Activated CD4-positive, alpha-beta memory T cell treated with anti-CD3 and anti-CD28 coated beads, Interleukin-2, amount 10 ng/mL, durations not matched to agents 7 days and 5 days (primary cell): ENCODE measurements at regions of chr11 and their contacts with region 1.

Region 1: GRCh38 chr11:62612366-62613290 is at the starts of genes EML3 and ROM1:
- DNase-seq: peak; percentile 91
- H3K4me3 Mint-ChIP-seq: peak within 1 kb of the TSS; percentile 97
- H3K27ac Mint-ChIP-seq: peak within 1 kb of the TSS; percentile 93
- H3K4me1 Mint-ChIP-seq: peaks cover 65% of the 10 kb centered on the region
- H3K27me3 Mint-ChIP-seq: no peaks in the 10 kb centered on the region
- total RNA-seq, gene EML3: 121 to 122 TPM
- total RNA-seq, gene ROM1: 1.6 to 2.2 TPM

Region 2: GRCh38 chr11:62652161-62653006 is 39.8 kb after region 1 on chr11:
- CTCF ChIA-PET with region 1: no interaction called
- POLR2A ChIA-PET with region 1: interaction called, 11 read pairs
- DNase-seq: peak; percentile 47
- H3K4me3 Mint-ChIP-seq: peak overlapping the region; percentile 91
- H3K27ac Mint-ChIP-seq: peak overlapping the region; percentile 85
- H3K4me1 Mint-ChIP-seq: peaks cover 34% of the 10 kb centered on the region
- H3K27me3 Mint-ChIP-seq: no peaks in the 10 kb centered on the region

Region 3: GRCh38 chr11:62922658-62923431 is 310.2 kb after region 1 on chr11:
- CTCF ChIA-PET with region 1: no interaction called
- POLR2A ChIA-PET with region 1: no interaction called
- DNase-seq: no peak
- H3K4me3 Mint-ChIP-seq: no peak overlapping the region
- H3K27ac Mint-ChIP-seq: no peak overlapping the region
- H3K4me1 Mint-ChIP-seq: peaks cover 18% of the 10 kb centered on the region
- H3K27me3 Mint-ChIP-seq: peaks cover 68% of the 10 kb centered on the region